ENCODE measurements at regions of chr15 and their contacts with region 1.

Region 1: DNA sequence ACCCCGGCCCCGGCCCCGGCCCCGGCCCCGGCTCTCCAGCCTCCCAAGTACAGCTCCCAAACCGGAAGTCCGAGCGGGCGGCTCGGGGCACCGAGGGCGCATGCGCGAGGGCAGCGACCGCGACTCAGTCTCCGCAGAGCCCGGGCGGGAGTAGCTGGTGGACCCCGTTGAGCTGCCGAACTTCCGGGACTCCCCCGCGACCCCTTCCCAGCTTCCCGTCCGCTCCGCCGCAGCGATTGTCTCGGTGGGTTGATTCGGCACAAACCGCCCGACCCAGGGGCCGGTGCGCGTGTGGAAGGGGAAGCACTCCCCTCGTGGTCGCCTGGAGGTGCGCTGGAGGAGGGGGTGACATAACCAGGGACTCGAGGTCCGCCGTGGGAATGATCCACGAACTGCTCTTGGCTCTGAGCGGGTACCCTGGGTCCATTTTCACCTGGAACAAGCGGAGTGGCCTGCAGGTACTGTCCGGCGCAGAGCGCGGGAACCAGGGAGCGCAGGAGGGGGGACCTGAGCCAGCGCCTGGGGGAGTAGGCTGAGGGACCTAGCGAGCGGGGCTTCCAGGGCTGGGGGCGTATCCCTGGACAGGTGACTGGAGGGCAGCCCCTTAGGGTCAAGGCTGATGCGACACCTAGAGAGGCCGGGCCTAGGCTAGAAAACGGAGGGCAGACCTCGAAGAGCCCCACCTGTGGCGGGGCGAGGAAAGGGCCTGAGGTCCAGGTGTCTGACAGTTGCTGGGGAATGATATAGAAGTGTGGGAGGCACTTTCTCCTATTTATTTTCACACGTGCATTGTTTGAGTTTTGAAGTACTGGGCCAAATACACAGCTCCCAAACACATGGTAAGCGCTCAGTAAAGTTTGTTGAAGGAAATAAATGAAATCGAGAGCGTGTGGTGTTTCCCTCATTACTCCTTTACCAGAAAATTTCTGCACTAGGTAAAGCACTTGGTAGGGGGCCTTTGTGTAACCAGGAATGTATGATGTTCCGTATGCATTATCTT is at the starts of genes TUBGCP4 and ZSCAN29:
- DNase-seq: peak; percentile 93

Region 2: DNA sequence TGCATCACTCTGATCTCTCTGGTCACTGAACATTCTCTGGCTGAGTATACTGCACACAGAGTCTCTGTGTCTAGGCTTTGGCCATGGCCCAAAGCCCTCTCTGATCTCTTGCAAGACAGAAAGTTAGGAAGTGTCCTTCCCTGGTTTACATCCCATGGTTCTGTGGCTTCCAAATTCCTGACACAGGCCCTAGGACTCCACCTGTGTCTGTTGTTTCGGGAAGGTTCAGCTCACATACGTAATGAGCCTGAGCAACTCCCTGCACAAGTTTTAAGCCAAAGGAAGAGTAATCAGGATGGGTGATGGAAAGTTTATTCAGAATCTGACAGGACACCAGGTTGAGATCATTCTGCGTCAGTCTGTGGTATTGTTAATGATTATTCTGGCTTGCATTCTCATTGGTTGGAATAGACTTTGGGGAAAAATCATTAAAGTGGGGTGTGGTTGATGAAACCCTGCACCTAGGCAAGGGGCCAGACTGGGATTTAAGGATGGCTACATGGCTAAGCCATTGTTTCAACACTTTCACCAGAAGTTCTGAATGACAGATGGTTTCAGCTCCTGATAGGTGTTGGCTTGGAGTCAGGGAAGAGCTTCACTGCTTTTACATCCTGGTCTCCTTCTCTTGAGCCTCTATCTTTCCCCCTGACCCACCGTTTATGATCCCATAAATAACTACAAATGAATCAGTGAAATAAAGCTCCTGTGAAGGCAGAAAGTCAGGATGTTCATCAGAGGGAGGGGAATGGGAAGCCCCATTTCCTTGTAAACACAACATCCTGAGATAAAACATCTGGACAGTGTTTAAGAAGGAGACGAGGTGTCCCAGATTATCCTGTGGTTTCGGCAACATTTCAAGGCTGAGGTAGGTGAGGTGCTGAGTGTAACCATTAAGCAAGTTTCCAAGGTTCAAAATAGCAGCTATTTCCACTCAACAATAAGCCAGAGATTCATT is 55.0 kb before region 1 on chr15:
- CTCF ChIA-PET with region 1: no interaction called
- POLR2A ChIA-PET with region 1: no interaction called
- DNase-seq: no peak

Region 3: GRCh38 chr15:43352693-43353382 is 18.4 kb before region 1 on chr15:
- CTCF ChIA-PET with region 1: interaction called, 10 read pairs
- POLR2A ChIA-PET with region 1: interaction called, 3 read pairs
- DNase-seq: no peak